ENCODE measurements at regions of chr3 and their contacts with region 1.

Region 1: GRCh38 chr3:163261056-163261455 is 1764.4 kb downstream of the OTOL1 start:
- DNase-seq: no peak
- ATAC-seq: no peak
- H3K4me3 ChIP-seq: no peak overlapping the region
- H3K27ac ChIP-seq: no peak overlapping the region
- H3K4me1 ChIP-seq: no peaks in the 10 kb centered on the region
- H3K27me3 ChIP-seq: no peaks in the 10 kb centered on the region
- CTCF ChIP-seq: no peak

Region 2: DNA sequence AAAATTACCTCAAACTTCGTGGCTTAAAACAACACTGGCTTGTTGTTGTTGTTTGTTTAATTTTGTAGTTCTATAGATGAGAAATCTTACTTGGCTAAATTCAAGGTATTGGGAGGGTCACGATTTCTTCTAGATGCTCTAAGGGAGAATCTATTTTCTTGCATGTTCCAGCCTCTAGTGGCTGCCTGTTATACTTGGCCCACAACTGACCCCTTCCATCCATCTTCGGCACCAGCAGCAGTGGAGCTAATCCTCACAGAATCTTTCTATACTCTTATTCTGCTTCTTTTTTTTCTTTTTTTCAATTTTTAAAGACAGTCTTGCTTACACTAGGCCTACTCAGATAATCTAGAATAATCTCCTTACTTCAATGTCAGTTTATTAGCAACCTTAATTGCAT is 563.1 kb before region 1 on chr3:
- CTCF ChIA-PET with region 1: no interaction called
- POLR2A ChIA-PET with region 1: no interaction called
- intact Hi-C with region 1: no loop called
- DNase-seq: no peak
- ATAC-seq: no peak
- H3K4me3 ChIP-seq: no peak overlapping the region
- H3K27ac ChIP-seq: no peak overlapping the region
- H3K4me1 ChIP-seq: no peaks in the 10 kb centered on the region
- H3K27me3 ChIP-seq: no peaks in the 10 kb centered on the region
- CTCF ChIP-seq: no peak

Region 3: DNA sequence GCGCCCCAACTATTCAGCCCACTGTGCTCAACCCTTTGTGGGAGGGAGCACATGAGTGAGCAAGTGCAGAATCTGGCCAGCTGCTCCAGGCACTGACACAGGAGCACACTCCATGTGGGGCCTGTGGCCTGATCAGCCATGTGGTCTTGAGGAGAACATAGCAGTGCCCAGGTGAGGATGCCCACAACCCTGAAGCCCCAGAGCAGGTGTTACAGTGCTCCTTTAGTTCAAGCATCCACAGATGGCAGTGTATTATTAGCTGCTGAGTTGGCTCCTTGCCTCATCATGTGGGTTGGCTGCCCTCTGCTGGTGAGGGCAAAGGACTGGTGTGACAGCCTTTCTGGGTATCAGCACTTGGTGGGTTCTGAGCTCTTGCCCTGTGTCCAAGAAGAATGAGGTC is 229.1 kb after region 1 on chr3:
- CTCF ChIA-PET with region 1: no interaction called
- POLR2A ChIA-PET with region 1: no interaction called
- intact Hi-C with region 1: loop called (anchors 1 kb)
- DNase-seq: peak; percentile 79
- ATAC-seq: peak; percentile 95
- H3K4me3 ChIP-seq: no peak overlapping the region
- H3K27ac ChIP-seq: no peak overlapping the region
- H3K4me1 ChIP-seq: no peaks in the 10 kb centered on the region
- H3K27me3 ChIP-seq: no peaks in the 10 kb centered on the region
- CTCF ChIP-seq: peak; percentile 91

Measured in PC-3 (cell line).